WTC11 (cell line): ENCODE measurements at regions of chr2 and their contacts with region 1.

Region 1: DNA sequence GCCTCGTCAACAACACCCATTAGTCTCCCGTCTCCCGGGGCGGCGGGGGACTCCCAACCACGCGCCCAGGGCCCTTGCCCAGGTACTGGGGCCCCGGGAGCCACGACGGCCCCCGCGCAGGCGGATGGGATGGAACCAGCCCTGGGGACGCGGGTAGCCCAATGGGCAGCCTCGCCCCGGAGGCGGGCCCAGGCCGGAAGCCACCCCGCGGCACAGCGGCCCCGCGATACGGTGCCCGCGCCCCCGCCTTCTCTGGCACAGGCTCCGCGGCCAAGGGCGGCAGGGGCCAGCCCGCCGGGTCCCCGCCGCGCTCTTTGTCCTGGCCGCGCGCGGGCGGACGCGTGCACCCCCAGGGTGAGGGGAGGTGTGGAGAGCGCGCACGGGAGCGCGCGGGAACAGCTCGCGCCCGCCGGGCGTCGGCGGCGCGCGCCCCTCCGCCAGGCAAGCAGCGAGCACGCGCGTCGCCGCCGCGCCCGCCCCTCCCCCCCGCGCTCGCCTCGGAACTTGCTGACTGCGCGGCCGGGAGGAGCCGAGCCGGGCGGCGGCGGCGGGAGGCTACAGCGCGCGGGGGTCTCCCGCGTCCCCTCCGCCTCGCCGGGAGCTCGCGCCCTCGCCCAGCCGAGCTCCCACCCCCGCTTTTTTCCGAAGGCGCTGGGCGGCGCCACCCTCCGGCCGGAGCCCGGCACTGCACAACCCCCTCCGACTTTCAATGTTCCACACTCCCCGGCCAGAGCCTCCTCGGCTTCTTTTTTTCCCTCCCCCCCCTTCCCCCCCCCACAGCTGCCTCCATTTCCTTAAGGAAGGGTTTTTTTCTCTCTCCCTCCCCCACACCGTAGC is at the start of gene UBE2E3:
- DNase-seq: peak; percentile 88
- ATAC-seq: peak; percentile 80
- H3K4me3 Mint-ChIP-seq: peak within 1 kb of the TSS; percentile 99
- H3K27ac Mint-ChIP-seq: peak within 1 kb of the TSS; percentile 98
- H3K4me1 Mint-ChIP-seq: peaks cover 50% of the 10 kb centered on the region
- H3K27me3 Mint-ChIP-seq: no peaks in the 10 kb centered on the region
- CTCF ChIP-seq: peak; percentile 46; the same call in 1 of the 2 replicates
- total RNA-seq, gene UBE2E3: 75.1 to 76.4 TPM (median 76.3 TPM) in 3 replicates

Region 2: DNA sequence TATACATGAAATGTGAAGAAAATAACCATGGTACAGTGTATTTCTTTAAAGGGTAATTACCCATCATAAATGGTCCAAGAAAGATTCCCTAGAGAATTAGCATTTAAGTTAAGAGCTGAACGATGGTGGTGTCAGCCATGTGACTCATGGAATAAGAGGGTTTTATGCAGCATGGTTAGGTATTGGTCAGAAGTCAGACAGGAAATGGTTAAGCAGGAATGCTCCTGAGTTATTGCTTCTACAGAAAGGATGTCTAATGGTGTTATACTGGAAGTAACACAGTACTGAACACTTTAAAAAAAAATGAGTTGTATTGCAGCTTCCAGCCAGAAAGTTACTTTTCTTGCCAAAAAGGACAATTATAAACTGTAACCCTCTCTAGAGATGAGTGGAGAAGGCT is 72.6 kb before region 1 on chr2:
- CTCF ChIA-PET with region 1: interaction called, 10 read pairs
- POLR2A ChIA-PET with region 1: interaction called, 5 read pairs
- DNase-seq: no peak
- ATAC-seq: no peak
- H3K4me3 Mint-ChIP-seq: no peak overlapping the region
- H3K27ac Mint-ChIP-seq: peak overlapping the region; percentile 74; the same call in 1 of the 2 replicates
- H3K4me1 Mint-ChIP-seq: peaks cover 53% of the 10 kb centered on the region
- H3K27me3 Mint-ChIP-seq: no peaks in the 10 kb centered on the region
- CTCF ChIP-seq: no peak

Region 3: DNA sequence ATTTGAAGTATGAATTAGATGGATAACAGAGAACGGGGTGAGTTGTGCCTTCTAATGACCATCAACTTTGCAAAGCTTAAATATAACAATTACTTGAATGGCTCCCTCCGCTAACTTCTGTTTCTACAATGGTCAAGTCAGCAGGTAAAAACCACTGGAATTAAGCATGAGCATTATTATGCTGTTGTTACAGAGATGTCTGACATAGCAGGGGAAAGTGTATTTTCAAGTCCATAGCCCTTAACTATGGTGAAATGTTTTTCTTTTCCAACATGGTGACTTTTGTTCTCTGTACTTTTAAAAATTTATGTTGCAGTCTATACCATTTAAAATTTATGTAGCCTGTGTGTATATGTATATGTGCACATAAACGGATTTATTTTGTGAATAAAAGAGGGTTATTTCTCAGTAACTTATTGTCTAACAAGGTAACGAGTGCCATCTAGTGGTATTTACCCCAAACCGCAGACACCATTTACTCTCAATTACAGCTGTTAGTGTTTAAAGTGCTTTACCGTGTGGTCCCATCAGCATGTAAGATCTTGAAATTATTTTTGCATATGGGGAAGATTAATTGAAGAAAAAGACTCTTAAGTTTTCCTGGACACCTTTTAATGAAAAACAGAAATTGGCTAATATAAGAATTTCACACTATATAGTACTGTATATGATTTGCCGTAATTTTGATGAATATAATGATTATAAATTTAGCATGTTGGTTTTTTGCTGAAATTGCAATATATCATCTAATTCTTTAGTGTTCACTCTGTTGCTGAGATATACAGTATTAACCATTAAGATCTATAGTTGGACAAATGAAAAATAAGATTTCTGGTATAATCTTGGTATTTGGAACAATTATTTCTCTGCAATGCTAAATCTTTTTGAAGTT is 78.3 kb after region 1 on chr2:
- CTCF ChIA-PET with region 1: interaction called, 13 read pairs
- POLR2A ChIA-PET with region 1: no interaction called
- DNase-seq: peak; percentile 17
- ATAC-seq: peak; percentile 58
- H3K4me3 Mint-ChIP-seq: no peak overlapping the region
- H3K27ac Mint-ChIP-seq: no peak overlapping the region
- H3K4me1 Mint-ChIP-seq: peaks cover 47% of the 10 kb centered on the region
- H3K27me3 Mint-ChIP-seq: no peaks in the 10 kb centered on the region
- CTCF ChIP-seq: peak; percentile 71